PC-3 (cell line): ENCODE measurements at regions of chr14 and their contacts with region 1.

Region 1: DNA sequence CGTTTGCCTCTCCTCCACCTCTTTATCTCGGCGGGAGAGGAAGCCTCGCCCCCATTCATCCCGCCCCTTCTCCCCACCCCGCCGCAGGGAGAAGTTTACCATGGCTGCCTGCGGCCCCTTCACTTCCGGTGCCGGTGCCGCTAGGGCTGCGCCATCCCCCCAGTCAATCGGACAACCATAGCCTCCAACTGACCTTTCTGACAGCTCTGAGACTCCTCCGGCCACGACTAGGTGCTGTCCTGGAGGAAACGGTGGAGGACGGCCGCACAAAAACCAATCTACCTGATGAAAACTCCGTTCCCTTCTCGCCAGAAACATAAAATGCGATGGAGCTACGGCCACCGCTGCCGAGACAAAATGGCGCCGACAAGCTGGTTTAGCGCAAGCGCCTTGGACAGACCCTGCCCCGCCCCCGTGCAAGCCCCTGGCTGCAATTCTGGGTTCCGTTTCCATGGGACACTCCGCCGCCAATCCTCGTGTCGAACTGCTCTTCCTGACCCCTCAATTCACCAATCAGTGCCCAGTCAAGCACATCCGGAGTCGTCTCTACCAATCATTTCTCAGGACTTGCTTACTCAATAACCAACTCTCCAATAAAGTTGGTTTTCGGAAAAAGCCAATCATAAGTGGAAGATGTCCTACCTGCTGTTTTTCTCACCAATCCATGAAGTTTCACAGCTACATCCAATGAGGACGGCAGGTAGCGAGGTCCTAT is 436 bp upstream of the ARID4A start:
- DNase-seq: peak; percentile 100
- ATAC-seq: peak; percentile 87
- H3K4me3 ChIP-seq: peak overlapping the region; percentile 78
- H3K27ac ChIP-seq: peak overlapping the region; percentile 78
- H3K4me1 ChIP-seq: peaks cover 18% of the 10 kb centered on the region
- H3K27me3 ChIP-seq: no peaks in the 10 kb centered on the region
- CTCF ChIP-seq: 0 out of 2 replicates have a peak, but pooled peaks have one; percentile 24

Region 2: GRCh38 chr14:58199726-58200479 is 98.0 kb before region 1 on chr14 and contains the start of gene ACTR10:
- CTCF ChIA-PET with region 1: no interaction called
- POLR2A ChIA-PET with region 1: interaction called, 10 read pairs
- intact Hi-C with region 1: loop called (anchors 2 kb)
- DNase-seq: peak; percentile 99
- ATAC-seq: peak; percentile 94
- H3K4me3 ChIP-seq: peak within 1 kb of the TSS; percentile 88
- H3K27ac ChIP-seq: peak within 1 kb of the TSS; percentile 55
- H3K4me1 ChIP-seq: peaks cover 15% of the 10 kb centered on the region; the same call in 1 of the 2 replicates
- H3K27me3 ChIP-seq: peaks cover 10% of the 10 kb centered on the region; the same call in 1 of the 2 replicates
- CTCF ChIP-seq: no peak
- total RNA-seq, gene ACTR10: 118 and 126 TPM in 2 replicates

Region 3: GRCh38 chr14:58239244-58240195 is 58.4 kb before region 1 on chr14:
- CTCF ChIA-PET with region 1: no interaction called
- POLR2A ChIA-PET with region 1: interaction called, 19 read pairs
- intact Hi-C with region 1: loop called (anchors 1 kb)
- DNase-seq: peak; percentile 98
- ATAC-seq: peak; percentile 37
- H3K4me3 ChIP-seq: peak overlapping the region; percentile 72
- H3K27ac ChIP-seq: no peak overlapping the region
- H3K4me1 ChIP-seq: peaks cover 14% of the 10 kb centered on the region
- H3K27me3 ChIP-seq: no peaks in the 10 kb centered on the region
- CTCF ChIP-seq: no peak

Region 4: DNA sequence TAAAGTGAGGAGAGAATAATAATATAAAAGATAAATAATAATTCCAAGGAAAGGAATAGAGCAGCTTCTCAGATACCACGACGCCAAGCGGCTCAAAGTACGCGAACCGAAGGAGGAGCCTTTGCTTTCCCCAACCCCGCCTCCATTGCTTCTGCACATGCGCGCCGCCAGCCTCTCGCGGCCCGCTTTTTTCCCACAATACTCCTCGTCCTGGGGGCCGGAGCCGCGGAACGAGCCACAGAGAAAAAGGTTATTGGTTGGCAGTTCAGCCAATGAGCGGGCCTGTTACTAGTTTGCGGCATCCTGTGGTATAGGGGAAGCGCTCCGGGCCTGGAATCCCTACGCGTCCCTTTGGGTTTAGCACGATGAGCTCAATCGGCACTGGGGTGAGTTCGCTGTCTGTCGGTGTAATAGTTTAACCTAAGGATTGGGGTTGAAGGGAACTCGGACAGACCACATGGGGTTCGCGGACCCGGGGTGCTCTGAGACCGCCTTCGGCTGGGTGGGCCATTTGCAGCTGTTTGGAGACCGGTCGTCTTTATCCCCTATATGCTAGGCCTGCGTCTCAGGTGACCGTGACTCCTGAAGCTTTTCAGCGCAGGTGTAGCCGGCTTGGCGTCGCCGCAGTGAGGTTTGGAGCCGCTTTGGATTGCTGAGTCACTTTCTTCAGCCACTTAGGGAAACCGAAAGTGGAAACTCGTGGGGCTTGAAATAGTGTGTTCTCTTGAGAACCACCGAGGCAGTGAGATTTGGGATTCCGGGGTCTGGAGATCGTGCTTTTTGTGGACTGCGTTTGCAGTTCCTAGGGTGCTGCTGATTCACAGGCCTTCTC is 53.1 kb before region 1 on chr14 and contains the start of gene PSMA3:
- CTCF ChIA-PET with region 1: no interaction called
- POLR2A ChIA-PET with region 1: interaction called, 19 read pairs
- intact Hi-C with region 1: loop called (anchors 1 kb)
- DNase-seq: peak; percentile 100
- ATAC-seq: peak; percentile 87
- H3K4me3 ChIP-seq: peak within 1 kb of the TSS; percentile 76
- H3K27ac ChIP-seq: peak within 1 kb of the TSS; percentile 87
- H3K4me1 ChIP-seq: peaks cover 25% of the 10 kb centered on the region
- H3K27me3 ChIP-seq: no peaks in the 10 kb centered on the region
- CTCF ChIP-seq: no peak
- total RNA-seq, gene PSMA3: 669 and 700 TPM in 2 replicates

Region 5: DNA sequence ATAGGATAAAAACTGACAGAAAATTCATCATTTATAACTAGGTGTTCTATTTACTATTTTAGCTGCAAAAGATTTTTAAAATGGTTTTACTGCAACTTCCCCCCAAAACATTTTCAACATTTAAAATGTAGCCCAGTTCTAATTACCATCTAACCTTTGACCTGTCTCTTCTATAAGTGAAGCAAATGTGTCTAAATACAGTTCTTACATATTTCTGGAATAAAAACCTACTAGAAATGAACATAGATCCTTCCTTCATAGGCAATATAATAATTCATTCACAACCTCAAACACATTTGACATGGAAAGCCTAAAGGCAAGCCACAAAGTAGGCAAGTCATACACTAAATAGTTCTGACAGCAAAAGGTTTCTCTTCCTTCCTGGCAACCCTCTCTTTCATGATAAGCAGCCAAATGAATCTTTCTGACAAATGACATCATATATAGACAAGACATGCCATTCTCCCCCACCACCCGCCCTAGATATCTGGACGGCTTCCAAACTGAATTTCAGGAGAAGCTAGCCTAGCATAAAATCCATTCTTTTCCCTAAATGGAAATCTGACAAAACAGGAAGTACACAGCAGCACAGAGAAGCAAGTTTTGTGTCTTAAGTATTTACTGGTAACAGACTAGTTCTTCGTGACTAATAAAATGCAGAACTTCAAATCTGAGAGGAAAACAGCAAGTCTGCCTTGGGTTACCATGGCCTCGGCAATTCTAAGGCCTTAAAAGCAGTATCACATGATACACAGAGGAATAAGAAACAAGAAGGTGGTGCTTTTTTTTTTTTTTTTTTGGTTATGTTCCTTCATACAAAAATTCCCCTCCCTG is 16.7 kb before region 1 on chr14:
- CTCF ChIA-PET with region 1: no interaction called
- POLR2A ChIA-PET with region 1: no interaction called
- intact Hi-C with region 1: loop called (anchors 2 kb)
- DNase-seq: peak; percentile 49
- ATAC-seq: peak; percentile 32
- H3K4me3 ChIP-seq: no peak overlapping the region
- H3K27ac ChIP-seq: no peak overlapping the region
- H3K4me1 ChIP-seq: no peaks in the 10 kb centered on the region
- H3K27me3 ChIP-seq: no peaks in the 10 kb centered on the region
- CTCF ChIP-seq: no peak

Region 6: GRCh38 chr14:58331111-58331510 is 33.2 kb after region 1 on chr14:
- CTCF ChIA-PET with region 1: no interaction called
- POLR2A ChIA-PET with region 1: no interaction called
- intact Hi-C with region 1: loop called (anchors 1 kb)
- DNase-seq: peak; percentile 84
- ATAC-seq: peak; percentile 90
- H3K4me3 ChIP-seq: no peak overlapping the region
- H3K27ac ChIP-seq: no peak overlapping the region
- H3K4me1 ChIP-seq: peaks cover 6% of the 10 kb centered on the region; the same call in 1 of the 2 replicates
- H3K27me3 ChIP-seq: no peaks in the 10 kb centered on the region
- CTCF ChIP-seq: no peak

Region 7: GRCh38 chr14:58427281-58428117 is 129.6 kb after region 1 on chr14 and contains the starts of genes KIAA0586 and TIMM9:
- CTCF ChIA-PET with region 1: no interaction called
- POLR2A ChIA-PET with region 1: interaction called, 4 read pairs
- intact Hi-C with region 1: loop called (anchors 1 kb)
- DNase-seq: peak; percentile 100
- ATAC-seq: peak; percentile 89
- H3K4me3 ChIP-seq: peak within 1 kb of the TSS; percentile 70
- H3K27ac ChIP-seq: peak within 1 kb of the TSS; percentile 77
- H3K4me1 ChIP-seq: peaks cover 22% of the 10 kb centered on the region
- H3K27me3 ChIP-seq: no peaks in the 10 kb centered on the region
- CTCF ChIP-seq: no peak
- total RNA-seq, gene KIAA0586: 50.3 and 50.8 TPM in 2 replicates
- total RNA-seq, gene TIMM9: 105 and 155 TPM in 2 replicates